ENCODE measurements at regions of chr11 and their contacts with region 1.

Region 1: GRCh38 chr11:62905927-62906531 is 15.1 kb downstream of the CHRM1 start:
- DNase-seq: peak; percentile 67 to 72 (median 70)
- H3K4me3 ChIP-seq: no peak overlapping the region
- H3K4me3 Mint-ChIP-seq: peak overlapping the region; percentile 35 to 37
- H3K27ac ChIP-seq: no peak overlapping the region
- H3K27ac Mint-ChIP-seq: peak overlapping the region in 1 of 7 donors; percentile 31
- H3K4me1 ChIP-seq: no peaks in the 10 kb centered on the region
- H3K4me1 Mint-ChIP-seq: peaks cover 9% of the 10 kb centered on the region
- H3K27me3 ChIP-seq: no peaks in the 10 kb centered on the region
- H3K27me3 Mint-ChIP-seq: peaks cover 10 to 19% (median 14%) of the 10 kb centered on the region in 3 donors
- CTCF ChIP-seq: peak; percentile 96

Region 2: DNA sequence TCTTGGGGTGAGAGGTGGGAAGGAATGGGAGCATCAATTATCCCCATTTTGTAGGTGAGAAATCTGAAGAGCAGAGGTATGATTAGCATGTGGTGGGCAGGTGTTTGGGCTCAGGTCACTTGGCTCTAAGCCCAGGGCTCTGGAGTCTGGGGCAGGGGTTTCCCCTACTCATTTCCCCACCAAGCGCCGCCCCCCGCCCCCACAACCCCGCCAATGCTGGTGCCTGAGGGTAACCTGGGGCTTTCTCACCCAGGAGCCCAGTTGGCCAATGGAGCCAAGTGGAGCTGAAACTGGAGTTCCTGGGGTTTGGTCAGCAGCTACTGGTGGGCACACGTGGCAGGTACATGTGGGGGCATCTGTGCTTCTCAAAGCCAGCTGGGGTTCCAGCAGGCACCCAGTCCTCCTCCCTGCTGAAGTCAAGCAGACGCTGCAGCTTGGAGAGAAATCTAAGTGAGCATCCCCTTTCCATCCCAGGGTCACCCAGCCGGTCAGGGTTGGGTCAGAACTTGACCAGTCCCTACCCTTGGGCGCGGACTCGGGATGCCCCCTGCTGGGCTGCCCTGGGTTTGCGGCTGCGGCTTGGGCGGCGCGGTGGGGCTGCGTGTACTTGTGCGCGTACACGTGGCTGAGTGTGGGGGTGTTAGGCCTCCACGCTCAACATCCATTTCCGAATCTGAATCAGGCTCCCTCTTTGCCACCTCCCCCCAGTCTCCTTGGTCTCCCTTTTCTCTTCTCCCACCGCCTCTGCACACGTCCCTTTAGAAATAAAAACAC is 16.8 kb after region 1 on chr11:
- intact Hi-C with region 1: no loop called
- DNase-seq: no peak
- H3K4me3 ChIP-seq: no peak overlapping the region
- H3K4me3 Mint-ChIP-seq: peak overlapping the region in 1 of 2 donors; percentile 90
- H3K27ac ChIP-seq: no peak overlapping the region
- H3K27ac Mint-ChIP-seq: peak overlapping the region in 1 of 7 donors; percentile 35
- H3K4me1 ChIP-seq: peaks cover 6 to 17% of the 10 kb centered on the region in 2 donors
- H3K4me1 Mint-ChIP-seq: peaks cover 20% of the 10 kb centered on the region
- H3K27me3 ChIP-seq: peaks cover 35 to 61% of the 10 kb centered on the region in 2 donors
- H3K27me3 Mint-ChIP-seq: peaks cover 71 to 81% (median 77%) of the 10 kb centered on the region in 3 donors
- CTCF ChIP-seq: no peak

Region 3: GRCh38 chr11:63023841-63024648 is 118.0 kb after region 1 on chr11:
- intact Hi-C with region 1: loop called (anchors 1 to 2 kb)
- DNase-seq: peak; percentile 76 to 86 (median 77)
- H3K4me3 ChIP-seq: no peak overlapping the region
- H3K4me3 Mint-ChIP-seq: peak overlapping the region in 1 of 2 donors; percentile 63
- H3K27ac ChIP-seq: peak overlapping the region; percentile 21 to 32
- H3K27ac Mint-ChIP-seq: peak overlapping the region in 4 of 7 donors; percentile 31 to 64 (median 32)
- H3K4me1 ChIP-seq: peaks cover 7 to 8% of the 10 kb centered on the region in 2 donors
- H3K4me1 Mint-ChIP-seq: peaks cover 9% of the 10 kb centered on the region
- H3K27me3 ChIP-seq: no peaks in the 10 kb centered on the region
- H3K27me3 Mint-ChIP-seq: peaks cover 6 to 12% (median 6%) of the 10 kb centered on the region in 3 donors
- CTCF ChIP-seq: peak; percentile 98